Activated naive CD4-positive, alpha-beta T cell treated with anti-CD3 and anti-CD28 coated beads for 36 hours (primary cell): ENCODE measurements at regions of chr11 and their contacts with region 1.

Region 1: DNA sequence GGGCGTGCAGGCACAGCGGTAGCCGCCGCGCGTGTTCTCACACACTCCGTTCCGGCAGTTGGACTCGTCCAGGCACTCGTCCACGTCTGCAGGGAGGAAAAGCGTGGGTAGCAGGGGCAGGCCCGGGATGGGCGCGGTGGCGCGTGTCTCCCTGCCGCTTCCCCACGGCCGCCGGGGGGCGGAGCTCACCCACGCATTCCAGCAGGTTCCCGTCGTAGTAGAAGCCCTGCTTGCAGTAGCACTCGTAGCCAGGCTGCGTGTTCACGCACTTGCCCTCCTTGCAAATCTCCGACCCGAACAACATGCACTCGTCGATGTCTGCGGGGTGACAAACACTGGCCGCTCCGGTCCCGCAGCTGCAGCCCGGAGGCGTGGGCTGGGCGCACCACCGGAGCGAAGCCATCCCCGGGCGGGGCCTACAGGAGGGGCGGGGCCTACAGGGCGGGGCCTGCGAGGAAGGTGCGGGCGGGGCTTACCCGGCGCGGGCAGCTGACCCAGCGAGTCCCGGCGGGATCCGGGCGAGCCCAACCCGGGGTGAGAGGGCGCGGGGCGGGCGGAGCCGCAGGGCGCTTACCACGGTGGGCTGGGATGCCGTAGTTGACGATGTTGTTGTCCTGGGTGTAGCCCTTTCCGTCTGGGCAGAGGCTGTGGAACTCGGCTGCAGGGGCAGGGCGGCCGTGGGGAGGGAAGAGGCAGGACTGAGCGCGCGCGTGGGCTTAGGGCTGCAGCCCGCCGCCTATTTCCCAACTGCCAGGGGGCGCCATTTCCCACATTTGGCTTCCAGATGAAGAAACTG is 15.6 kb downstream of the SCYL1 start:
- DNase-seq: peak; percentile 93
- H3K4me3 Mint-ChIP-seq: peak overlapping the region; percentile 80
- H3K27ac Mint-ChIP-seq: peak overlapping the region; percentile 82
- H3K4me1 Mint-ChIP-seq: peaks cover 16% of the 10 kb centered on the region
- H3K27me3 Mint-ChIP-seq: no peaks in the 10 kb centered on the region

Region 2: GRCh38 chr11:65159012-65159411 is 381.5 kb before region 1 on chr11:
- CTCF ChIA-PET with region 1: no interaction called
- intact Hi-C with region 1: no loop called
- DNase-seq: no peak
- H3K4me3 Mint-ChIP-seq: no peak overlapping the region
- H3K27ac Mint-ChIP-seq: no peak overlapping the region
- H3K4me1 Mint-ChIP-seq: no peaks in the 10 kb centered on the region
- H3K27me3 Mint-ChIP-seq: no peaks in the 10 kb centered on the region

Region 3: GRCh38 chr11:65506770-65507505 is 33.6 kb before region 1 on chr11:
- CTCF ChIA-PET with region 1: no interaction called
- intact Hi-C with region 1: no loop called
- DNase-seq: peak; percentile 80
- H3K4me3 Mint-ChIP-seq: no peak overlapping the region
- H3K27ac Mint-ChIP-seq: no peak overlapping the region
- H3K4me1 Mint-ChIP-seq: peaks cover 40% of the 10 kb centered on the region
- H3K27me3 Mint-ChIP-seq: no peaks in the 10 kb centered on the region

Region 4: GRCh38 chr11:65524741-65525545 is 15.6 kb before region 1 on chr11 and contains the start of gene SCYL1:
- CTCF ChIA-PET with region 1: interaction called, 29 read pairs
- intact Hi-C with region 1: loop called (anchors 2 kb)
- DNase-seq: peak; percentile 79
- H3K4me3 Mint-ChIP-seq: peak within 1 kb of the TSS; percentile 82
- H3K27ac Mint-ChIP-seq: peak within 1 kb of the TSS; percentile 77
- H3K4me1 Mint-ChIP-seq: peaks cover 61% of the 10 kb centered on the region
- H3K27me3 Mint-ChIP-seq: no peaks in the 10 kb centered on the region
- total RNA-seq, gene SCYL1: 57.9 to 58.3 TPM

Region 5: DNA sequence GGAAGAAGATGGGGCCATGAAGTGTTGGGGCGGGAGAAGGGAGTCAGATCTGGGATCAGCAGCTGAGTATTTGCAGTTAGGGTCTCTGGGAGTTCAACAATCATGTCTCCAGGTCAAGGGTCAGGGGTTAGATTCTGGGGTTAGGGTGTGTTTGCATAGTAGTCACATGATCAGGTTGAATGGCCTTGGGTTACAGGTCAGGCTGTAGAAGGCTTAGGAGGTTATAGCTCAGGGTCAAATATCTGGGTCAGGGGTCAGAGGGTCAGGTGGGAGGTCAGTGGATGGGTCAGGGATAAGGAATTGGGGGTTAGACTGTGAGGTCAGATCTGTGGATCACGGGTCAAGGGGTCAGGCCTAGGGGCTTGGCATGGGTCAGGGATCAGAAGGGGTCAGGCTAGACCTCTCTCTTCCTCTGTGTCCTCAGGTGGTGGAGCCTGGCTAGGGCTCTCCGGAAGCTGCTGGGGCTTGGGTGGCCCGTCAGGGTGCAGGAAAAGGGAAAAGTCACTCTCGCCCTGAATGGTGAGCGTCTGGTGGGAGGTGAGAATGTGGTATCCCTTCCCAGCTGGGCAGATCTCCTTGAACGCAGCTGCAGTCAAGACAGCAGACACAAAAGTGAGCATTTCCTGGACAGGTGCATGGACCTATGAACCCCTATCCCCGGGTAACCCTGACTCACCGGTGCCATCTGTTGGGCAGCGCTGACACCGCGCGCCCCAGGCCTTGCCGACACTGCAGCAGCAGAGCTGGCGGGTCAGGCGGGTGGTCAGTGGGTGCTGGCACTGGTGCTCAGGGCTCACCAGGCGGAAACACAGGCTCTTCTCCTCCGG is 11.3 kb after region 1 on chr11:
- CTCF ChIA-PET with region 1: interaction called, 21 read pairs
- intact Hi-C with region 1: loop called (anchors 1 kb)
- DNase-seq: peak; percentile 76
- H3K4me3 Mint-ChIP-seq: no peak overlapping the region
- H3K27ac Mint-ChIP-seq: peak overlapping the region; percentile 61
- H3K4me1 Mint-ChIP-seq: peaks cover 63% of the 10 kb centered on the region
- H3K27me3 Mint-ChIP-seq: no peaks in the 10 kb centered on the region

Region 6: DNA sequence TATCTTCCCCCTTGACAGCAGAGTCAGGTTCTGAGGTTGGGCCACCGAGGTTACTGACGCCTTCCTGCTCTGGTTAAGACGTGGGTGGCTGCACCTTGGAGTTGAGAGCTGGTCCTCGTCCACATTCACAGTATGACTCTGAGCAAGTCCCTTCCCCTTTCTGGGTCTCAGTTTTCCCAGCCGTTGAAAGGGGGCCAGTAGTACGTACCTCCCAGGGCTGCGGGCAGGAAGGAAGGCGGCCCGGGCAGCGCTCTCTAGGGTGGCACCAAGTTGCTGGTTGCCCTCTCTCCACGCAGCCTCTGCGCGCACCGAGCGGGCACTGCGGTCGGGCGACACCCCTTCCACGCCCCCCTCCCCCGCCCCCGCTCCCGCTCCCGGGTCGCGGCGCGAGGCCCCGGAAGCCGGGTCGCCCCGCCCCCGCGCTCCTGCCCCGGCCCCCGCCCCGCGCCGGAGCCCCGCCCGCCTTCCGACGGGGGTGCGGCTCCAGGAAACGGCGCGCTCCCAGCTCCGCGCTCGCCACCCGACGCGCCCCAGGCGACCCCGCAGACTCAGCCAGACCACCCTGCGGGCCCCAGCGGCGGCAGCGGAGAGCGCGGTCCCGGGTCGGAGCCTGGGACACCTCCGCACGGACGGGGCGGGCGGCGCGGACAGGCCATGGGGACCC is 35.2 kb after region 1 on chr11 and contains the start of gene EHBP1L1:
- CTCF ChIA-PET with region 1: interaction called, 86 read pairs
- intact Hi-C with region 1: loop called (anchors 1 kb)
- DNase-seq: peak; percentile 79
- H3K4me3 Mint-ChIP-seq: peak within 1 kb of the TSS; percentile 91
- H3K27ac Mint-ChIP-seq: peak within 1 kb of the TSS; percentile 85
- H3K4me1 Mint-ChIP-seq: peaks cover 54% of the 10 kb centered on the region
- H3K27me3 Mint-ChIP-seq: no peaks in the 10 kb centered on the region
- total RNA-seq, gene EHBP1L1: 51.9 to 54.6 TPM

Region 7: DNA sequence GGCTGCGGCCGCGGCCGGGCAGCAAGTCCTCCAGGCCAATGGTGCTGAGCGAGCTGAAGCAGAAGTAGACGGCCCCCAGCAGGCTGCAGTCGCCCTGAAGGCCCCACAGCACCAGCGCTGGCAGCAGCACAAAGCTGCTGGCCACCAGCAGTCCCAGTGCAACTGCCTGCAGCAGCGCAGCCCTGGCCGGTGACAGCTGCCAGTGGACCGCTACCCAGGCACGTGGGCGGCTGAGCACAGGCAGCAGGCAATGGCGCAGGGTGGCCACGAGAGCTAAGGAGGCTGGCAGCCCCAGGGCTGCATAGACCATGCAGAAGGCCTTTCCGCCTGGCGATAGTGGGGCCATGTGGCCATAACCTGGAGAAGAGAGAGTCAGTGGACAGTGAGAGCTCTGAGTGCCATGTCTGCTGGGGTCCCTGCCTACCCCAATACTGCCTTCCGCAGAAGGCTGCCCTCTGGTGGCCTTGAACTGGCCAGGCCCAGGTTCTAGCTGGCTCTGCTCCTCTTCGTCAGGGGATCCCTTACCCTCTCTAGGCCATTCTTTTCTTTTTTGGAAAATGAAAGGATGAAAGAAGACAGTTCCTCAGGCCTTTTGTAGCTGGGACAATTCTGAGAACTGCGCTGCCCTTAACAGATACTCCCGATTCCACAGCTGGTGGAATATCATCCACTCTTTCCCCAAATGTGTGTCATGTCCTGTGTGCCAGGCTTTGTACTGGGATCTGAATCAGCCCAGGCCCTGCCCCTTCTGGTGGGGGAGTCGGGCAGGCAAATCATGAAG is 53.2 kb after region 1 on chr11:
- CTCF ChIA-PET with region 1: interaction called, 35 read pairs
- intact Hi-C with region 1: loop called (anchors 1 kb)
- DNase-seq: peak; percentile 55
- H3K4me3 Mint-ChIP-seq: no peak overlapping the region
- H3K27ac Mint-ChIP-seq: no peak overlapping the region
- H3K4me1 Mint-ChIP-seq: peaks cover 16% of the 10 kb centered on the region
- H3K27me3 Mint-ChIP-seq: no peaks in the 10 kb centered on the region